ENCODE measurements at regions of chr22 and their contacts with region 1.

Region 1: GRCh38 chr22:45268958-45269844 is 15.5 kb upstream of the UPK3A start:
- DNase-seq: peak; percentile 95

Region 2: DNA sequence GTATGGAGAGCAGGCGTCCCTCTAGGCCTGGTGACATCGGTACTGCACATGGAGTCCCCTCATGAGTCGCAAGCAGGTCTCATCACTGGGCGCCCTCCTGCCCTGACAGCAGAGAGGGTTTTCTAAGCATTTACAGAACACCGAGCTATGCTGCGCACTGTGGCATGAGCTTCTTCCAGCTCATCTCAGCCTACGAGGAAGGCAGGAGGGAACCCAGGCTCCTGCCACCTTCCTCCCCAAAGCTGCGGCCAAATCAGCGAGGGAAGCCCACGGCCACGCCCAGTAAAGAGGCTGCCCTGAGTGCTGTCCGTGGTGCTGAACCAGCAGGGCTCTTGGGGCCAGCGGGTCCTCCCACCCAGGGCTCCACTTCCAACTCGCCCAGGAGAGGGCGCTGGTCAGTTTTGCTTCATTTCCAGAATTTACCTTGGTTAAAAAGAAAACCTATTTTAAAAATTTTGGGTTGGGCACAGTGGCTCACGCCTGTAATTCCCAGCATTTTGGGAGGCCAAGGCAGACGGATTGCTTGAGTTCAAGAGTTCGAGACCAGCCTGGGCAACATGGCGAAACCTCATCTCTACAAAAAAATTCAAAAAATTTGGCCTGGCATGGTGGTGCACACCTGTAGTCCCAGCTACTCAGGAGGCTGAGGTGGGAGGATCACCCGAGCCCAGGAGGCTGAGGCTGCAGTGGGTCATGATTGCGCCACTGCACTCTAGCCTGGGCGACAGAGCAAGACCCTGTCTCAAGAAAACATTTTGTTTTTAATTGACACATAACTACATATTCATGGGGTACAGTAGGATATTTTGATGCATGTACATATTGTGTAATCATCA is 293.6 kb before region 1 on chr22:
- intact Hi-C with region 1: loop called (anchors 10 kb)
- DNase-seq: peak; percentile 81

Region 3: GRCh38 chr22:45284705-45285262 is 15.6 kb after region 1 on chr22 and contains the start of gene UPK3A:
- intact Hi-C with region 1: no loop called
- DNase-seq: peak; percentile 90
- total RNA-seq, gene UPK3A: 0.40 TPM

Region 4: DNA sequence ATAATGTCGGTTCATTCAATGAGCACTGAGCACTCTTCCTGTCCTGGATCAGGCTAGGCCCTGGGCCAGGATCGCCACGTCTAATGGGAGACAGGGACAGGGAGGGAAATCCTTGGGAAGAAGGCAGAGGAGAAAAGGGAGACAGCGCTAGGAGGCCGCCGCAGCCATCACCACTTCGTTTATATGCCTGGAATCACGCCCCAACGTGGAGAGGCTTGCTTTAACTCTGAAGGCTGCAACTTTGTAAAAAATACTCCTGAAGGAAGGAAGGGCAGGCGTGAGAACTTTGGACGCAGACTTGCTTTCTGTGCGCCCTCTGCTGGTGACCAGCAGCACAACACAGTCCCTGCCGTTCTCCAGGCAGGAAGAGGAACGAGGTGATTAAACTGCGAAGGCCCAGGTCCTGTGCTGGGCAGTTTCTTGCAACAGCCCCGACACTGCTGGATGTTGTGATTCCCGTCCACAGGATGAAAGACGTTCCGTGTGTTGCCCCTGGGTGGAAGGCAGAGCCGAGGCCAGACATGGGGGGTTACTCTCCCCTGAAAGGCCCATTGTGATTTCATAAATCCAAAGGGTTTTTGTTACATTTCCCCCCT is 166.4 kb after region 1 on chr22:
- intact Hi-C with region 1: loop called (anchors 1 kb)
- DNase-seq: peak; percentile 93

Region 5: GRCh38 chr22:45553351-45554039 is 284.3 kb after region 1 on chr22:
- intact Hi-C with region 1: loop called (anchors 2 kb)
- DNase-seq: no peak